Colonic mucosa (tissue), 4 donors: ENCODE measurements at regions of chr17 and their contacts with region 1.

Region 1: DNA sequence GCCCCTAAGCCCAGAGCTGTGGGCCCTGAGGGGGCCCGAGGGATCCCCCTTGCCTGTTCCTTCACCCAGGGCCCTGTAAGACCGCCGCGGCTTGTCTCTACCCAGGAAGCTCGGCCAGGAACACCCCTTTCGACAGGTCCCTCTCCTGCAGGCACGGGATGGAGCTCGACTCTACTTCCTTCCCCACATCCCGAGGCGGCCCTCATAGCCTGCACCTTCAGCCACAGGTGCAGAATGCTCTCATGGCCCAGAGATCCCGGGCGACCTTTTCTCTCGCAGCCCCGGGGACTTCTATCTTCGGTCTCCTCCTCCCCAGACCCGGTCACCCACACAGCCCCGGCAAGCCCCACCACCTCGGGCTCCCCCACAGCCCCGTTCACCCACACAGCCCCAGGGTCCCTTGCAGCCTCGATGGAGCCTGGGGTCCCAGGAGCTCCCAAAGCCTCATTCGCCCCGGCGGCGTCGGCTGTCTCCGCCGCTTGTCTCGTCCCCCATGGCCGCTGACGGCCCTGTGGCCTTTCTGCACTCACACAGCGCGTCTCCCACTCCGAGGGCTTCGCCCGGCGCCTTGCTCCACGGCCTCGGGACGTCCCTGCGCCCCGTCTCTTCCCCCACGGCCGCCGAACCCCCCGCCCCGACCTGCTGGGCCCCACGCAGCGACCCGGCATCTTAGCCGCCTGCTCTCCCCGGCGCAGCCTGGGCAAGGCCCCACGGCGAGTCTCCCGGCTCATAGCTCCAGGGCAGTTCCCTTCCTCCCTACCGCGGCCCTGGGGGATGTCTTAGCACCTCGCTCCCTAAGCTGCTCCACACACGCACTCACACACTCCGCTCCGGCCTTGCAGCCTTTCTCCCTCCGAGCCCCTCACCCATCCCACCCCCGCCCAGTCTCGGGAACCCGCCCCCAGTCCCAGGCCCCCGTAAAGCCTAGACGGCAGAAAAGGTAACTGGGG is 650 bp downstream of the KIAA0753 start:
- DNase-seq: peak; percentile 42
- H3K4me3 ChIP-seq: peak overlapping the region; percentile 98
- H3K27ac ChIP-seq: peak overlapping the region; percentile 81
- H3K4me1 ChIP-seq: peaks cover 9% of the 10 kb centered on the region
- H3K27me3 ChIP-seq: no peaks in the 10 kb centered on the region
- CTCF ChIP-seq: no peak

Region 2: DNA sequence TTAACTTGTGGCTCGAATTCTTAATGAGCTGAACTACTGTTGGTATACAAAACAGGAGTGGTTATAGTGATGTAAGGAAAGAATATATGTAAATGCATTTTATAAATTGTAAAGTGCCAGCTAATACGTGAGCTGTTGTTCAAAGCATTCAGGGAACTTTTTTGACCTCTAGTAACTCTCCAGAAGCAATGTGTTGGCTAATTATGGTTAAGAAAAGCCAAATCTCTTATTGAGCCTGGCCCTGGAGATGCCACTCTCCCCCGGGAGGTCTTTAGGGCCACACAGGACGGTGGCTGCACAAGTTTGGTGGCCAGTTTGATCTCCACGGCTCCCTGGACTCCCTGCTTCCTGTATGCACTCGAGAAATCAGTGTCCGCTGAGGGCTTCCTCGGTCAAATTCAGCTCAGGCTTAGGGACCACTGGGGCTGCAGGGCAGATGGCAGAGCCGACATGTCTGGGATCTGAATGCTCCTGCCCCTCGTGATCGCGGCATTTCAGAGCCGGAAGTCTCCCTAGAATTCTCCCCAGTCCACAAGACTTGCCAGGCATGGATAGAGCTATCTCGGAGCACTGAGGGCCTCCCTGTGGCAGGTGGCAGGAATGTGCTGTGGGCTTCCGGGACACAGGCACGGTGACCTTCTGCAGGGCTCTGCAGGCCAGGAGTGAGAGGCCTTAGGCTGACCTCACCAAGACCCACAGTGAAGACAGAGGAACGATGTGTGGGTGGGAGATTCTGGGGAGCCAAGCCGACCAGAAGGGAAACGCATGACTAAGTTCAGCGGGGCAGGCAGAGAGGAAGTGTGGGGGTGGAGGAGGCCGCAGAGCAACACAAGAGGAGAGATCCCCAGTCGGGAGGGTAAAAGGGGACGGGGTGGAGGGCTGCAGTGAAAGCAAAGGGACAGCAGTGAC is 64.9 kb before region 1 on chr17:
- intact Hi-C with region 1: loop called (anchors 10 kb)
- DNase-seq: no peak
- H3K4me3 ChIP-seq: no peak overlapping the region
- H3K27ac ChIP-seq: no peak overlapping the region
- H3K4me1 ChIP-seq: no peaks in the 10 kb centered on the region
- H3K27me3 ChIP-seq: no peaks in the 10 kb centered on the region
- CTCF ChIP-seq: no peak